PC-3 (cell line): ENCODE measurements at regions of chr2 and their contacts with region 1.

Region 1: GRCh38 chr2:26144953-26145680 is 27.8 kb upstream of the GAREM2 start:
- DNase-seq: peak; percentile 80
- ATAC-seq: peak; percentile 39
- H3K4me3 ChIP-seq: no peak overlapping the region
- H3K27ac ChIP-seq: no peak overlapping the region
- H3K4me1 ChIP-seq: peaks cover 18% of the 10 kb centered on the region
- H3K27me3 ChIP-seq: no peaks in the 10 kb centered on the region
- CTCF ChIP-seq: peak; percentile 92

Region 2: GRCh38 chr2:25851740-25852503 is 293.2 kb before region 1 on chr2:
- CTCF ChIA-PET with region 1: interaction called, 3 read pairs
- POLR2A ChIA-PET with region 1: no interaction called
- intact Hi-C with region 1: loop called (anchors 2 kb)
- DNase-seq: peak; percentile 87
- ATAC-seq: peak; percentile 96
- H3K4me3 ChIP-seq: peak overlapping the region; percentile 53
- H3K27ac ChIP-seq: peak overlapping the region; percentile 22; the same call in 1 of the 2 replicates
- H3K4me1 ChIP-seq: peaks cover 14% of the 10 kb centered on the region
- H3K27me3 ChIP-seq: no peaks in the 10 kb centered on the region
- CTCF ChIP-seq: peak; percentile 82

Region 3: GRCh38 chr2:25991965-25992364 is 153.2 kb before region 1 on chr2:
- CTCF ChIA-PET with region 1: interaction called, 7 read pairs
- POLR2A ChIA-PET with region 1: no interaction called
- intact Hi-C with region 1: loop called (anchors 1 kb)
- DNase-seq: no peak
- ATAC-seq: peak; percentile 35
- H3K4me3 ChIP-seq: peak overlapping the region; percentile 51; the same call in 1 of the 2 replicates
- H3K27ac ChIP-seq: no peak overlapping the region
- H3K4me1 ChIP-seq: peaks cover 6% of the 10 kb centered on the region
- H3K27me3 ChIP-seq: no peaks in the 10 kb centered on the region
- CTCF ChIP-seq: no peak

Region 4: GRCh38 chr2:26268184-26268583 is 123.1 kb after region 1 on chr2:
- CTCF ChIA-PET with region 1: no interaction called
- POLR2A ChIA-PET with region 1: no interaction called
- intact Hi-C with region 1: no loop called
- DNase-seq: no peak
- ATAC-seq: no peak
- H3K4me3 ChIP-seq: no peak overlapping the region
- H3K27ac ChIP-seq: no peak overlapping the region
- H3K4me1 ChIP-seq: no peaks in the 10 kb centered on the region
- H3K27me3 ChIP-seq: no peaks in the 10 kb centered on the region
- CTCF ChIP-seq: no peak